Heart left ventricle (tissue), 16 donors: ENCODE measurements at regions of chr12 and their contacts with region 1.

Region 1: GRCh38 chr12:119780786-119781434 is 96.2 kb downstream of the CIT start:
- DNase-seq: peak in 1 of 5 donors; percentile 36
- ATAC-seq: no peak
- H3K4me3 ChIP-seq: no peak overlapping the region
- H3K27ac ChIP-seq: no peak overlapping the region
- H3K4me1 ChIP-seq: no peaks in the 10 kb centered on the region
- H3K27me3 ChIP-seq: no peaks in the 10 kb centered on the region
- CTCF ChIP-seq: peak; percentile 60 to 86 (median 72)
- POLR2A ChIP-seq: no peak

Region 2: GRCh38 chr12:119659289-119659897 is 121.5 kb before region 1 on chr12:
- intact Hi-C with region 1: loop called in 6 of 10 experiments (anchors 2 to 10 kb)
- DNase-seq: no peak
- ATAC-seq: no peak
- H3K4me3 ChIP-seq: no peak overlapping the region
- H3K27ac ChIP-seq: no peak overlapping the region
- H3K4me1 ChIP-seq: no peaks in the 10 kb centered on the region
- H3K27me3 ChIP-seq: no peaks in the 10 kb centered on the region
- CTCF ChIP-seq: peak; percentile 85 to 98 (median 90)
- POLR2A ChIP-seq: no peak

Region 3: DNA sequence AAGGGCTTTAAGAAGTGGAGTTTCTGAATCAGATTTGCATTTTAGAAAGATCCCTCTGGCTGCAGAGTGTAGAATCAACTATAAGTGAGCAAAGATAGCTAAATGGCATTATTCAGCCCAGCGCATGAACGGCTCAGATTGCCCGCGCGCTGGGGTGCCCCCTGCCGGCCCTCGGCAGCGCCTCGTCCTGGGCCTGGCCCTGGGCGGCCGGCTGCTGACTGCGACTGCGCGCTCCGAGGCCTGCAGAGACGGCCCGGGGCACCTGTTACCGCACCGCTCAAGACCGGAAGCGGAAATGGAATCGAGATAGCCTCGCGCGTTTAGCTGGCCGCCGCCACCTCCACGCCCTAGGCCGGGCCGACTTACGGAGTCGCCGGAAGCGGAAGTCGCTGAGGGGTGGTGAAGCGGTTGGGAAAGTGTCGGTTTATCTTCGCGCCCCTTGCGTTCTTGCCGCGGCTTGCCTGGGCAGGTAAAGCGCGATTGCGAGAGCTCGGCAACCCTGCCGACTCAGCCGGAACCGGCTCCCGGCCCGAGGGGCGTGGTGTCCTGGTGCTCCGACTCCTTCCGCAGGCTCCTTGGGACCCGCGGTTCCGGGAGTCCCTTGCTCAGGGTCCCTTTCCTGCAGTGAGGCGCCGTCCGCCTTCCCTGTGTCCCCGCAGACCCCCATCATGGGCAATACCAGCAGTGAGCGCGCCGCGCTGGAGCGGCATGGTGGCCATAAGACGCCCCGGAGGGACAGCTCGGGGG is 113.2 kb before region 1 on chr12 and contains the start of gene PRKAB1:
- intact Hi-C with region 1: loop called in 8 of 10 experiments (anchors 2 to 10 kb)
- DNase-seq: peak; percentile 95 to 98 (median 97)
- ATAC-seq: peak; percentile 99 to 100 (median 100)
- H3K4me3 ChIP-seq: peak within 1 kb of the TSS; percentile 74 to 99 (median 96)
- H3K27ac ChIP-seq: peak within 1 kb of the TSS; percentile 84 to 98 (median 94)
- H3K4me1 ChIP-seq: peaks cover 4 to 45% (median 29%) of the 10 kb centered on the region in 12 donors
- H3K27me3 ChIP-seq: no peaks in the 10 kb centered on the region
- CTCF ChIP-seq: peak; percentile 85 to 99 (median 94)
- POLR2A ChIP-seq: peak in 1 of 2 donors; percentile 55
- total RNA-seq, gene PRKAB1: 8.5 to 19.1 (median 10.3) TPM

Region 4: DNA sequence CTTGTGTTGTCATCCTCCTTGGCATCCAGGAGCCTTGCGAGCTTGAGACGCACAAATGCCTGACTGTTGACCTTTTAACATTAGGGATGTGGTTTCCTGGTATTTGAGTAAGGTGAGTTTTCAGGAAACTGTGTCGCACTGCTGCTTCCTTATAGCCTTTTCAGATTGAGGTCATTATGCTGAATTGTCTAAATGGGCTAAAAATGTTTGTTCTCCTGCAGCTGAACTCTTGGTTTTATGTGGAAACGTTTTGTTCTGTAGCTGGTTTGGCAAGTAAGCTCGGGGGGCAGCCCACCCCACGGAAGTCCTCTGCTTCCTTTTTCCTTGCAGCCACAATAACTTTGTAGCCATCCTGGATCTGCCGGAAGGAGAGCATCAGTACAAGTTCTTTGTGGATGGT is 107.3 kb before region 1 on chr12:
- intact Hi-C with region 1: loop called in 4 of 10 experiments (anchors 5 to 10 kb)
- DNase-seq: peak in 4 of 5 donors; percentile 45 to 63 (median 48)
- ATAC-seq: peak; percentile 61 to 89 (median 78)
- H3K4me3 ChIP-seq: no peak overlapping the region
- H3K27ac ChIP-seq: peak overlapping the region; percentile 52 to 90 (median 72)
- H3K4me1 ChIP-seq: peaks cover 0 to 51% (median 28%) of the 10 kb centered on the region in 12 donors
- H3K27me3 ChIP-seq: no peaks in the 10 kb centered on the region
- CTCF ChIP-seq: no peak
- POLR2A ChIP-seq: no peak

Region 5: DNA sequence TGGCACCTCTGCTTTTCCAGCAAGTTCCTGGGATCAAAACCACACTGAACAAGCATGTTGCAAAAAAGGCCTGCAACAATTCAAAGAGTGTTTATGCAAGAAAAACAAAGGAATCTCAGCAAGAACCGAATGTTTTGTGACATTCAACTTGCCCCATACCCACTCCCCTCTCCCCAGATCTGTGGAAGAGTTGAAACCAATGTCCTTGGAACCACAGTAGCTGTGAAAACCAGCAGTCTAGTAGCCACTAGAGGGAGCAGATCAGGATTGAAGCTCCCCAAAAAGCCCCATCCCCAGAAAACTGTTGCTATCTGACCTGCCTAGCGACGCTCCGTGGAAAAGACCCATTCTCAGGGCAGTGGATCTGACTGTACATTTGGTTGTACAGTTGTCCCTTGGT is 85.9 kb before region 1 on chr12:
- intact Hi-C with region 1: loop called in 2 of 10 experiments (anchors 5 to 10 kb)
- DNase-seq: no peak
- ATAC-seq: no peak
- H3K4me3 ChIP-seq: no peak overlapping the region
- H3K27ac ChIP-seq: no peak overlapping the region
- H3K4me1 ChIP-seq: peaks cover 0 to 27% (median 19%) of the 10 kb centered on the region in 12 donors
- H3K27me3 ChIP-seq: no peaks in the 10 kb centered on the region
- CTCF ChIP-seq: peak in 8 of 12 donors; percentile 19 to 40 (median 35)
- POLR2A ChIP-seq: no peak

Region 6: GRCh38 chr12:119704065-119704747 is 76.7 kb before region 1 on chr12:
- intact Hi-C with region 1: loop called in 2 of 10 experiments (anchors 5 to 10 kb)
- DNase-seq: peak in 4 of 5 donors; percentile 61 to 72 (median 68)
- ATAC-seq: peak; percentile 77 to 99 (median 82)
- H3K4me3 ChIP-seq: no peak overlapping the region
- H3K27ac ChIP-seq: peak overlapping the region; percentile 5 to 79 (median 66)
- H3K4me1 ChIP-seq: peaks cover 0 to 18% (median 9%) of the 10 kb centered on the region in 12 donors
- H3K27me3 ChIP-seq: no peaks in the 10 kb centered on the region
- CTCF ChIP-seq: no peak
- POLR2A ChIP-seq: no peak

Region 7: DNA sequence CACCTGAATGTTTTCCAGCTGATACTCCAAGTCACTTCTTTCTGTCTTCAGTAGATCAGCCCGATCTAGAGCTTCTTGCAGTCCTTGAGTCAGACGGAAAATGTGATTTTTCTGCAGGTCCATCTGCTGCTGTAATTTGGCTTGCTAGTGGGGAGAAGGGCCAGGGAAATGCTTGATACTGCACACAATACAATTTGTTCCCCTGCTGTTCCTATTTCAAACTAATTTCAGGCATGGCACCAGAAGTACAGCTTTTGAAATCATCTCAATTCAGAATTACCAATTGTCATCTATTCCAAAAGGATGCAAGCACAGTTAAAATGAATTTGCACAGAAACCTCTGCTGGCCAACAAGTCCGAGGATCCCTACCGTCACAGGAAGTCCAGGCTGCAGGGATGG is 59.6 kb before region 1 on chr12:
- intact Hi-C with region 1: loop called in 1 of 10 experiments (anchors 5 kb)
- DNase-seq: no peak
- ATAC-seq: no peak
- H3K4me3 ChIP-seq: no peak overlapping the region
- H3K27ac ChIP-seq: no peak overlapping the region
- H3K4me1 ChIP-seq: peaks cover 0 to 8% (median 6%) of the 10 kb centered on the region in 12 donors
- H3K27me3 ChIP-seq: no peaks in the 10 kb centered on the region
- CTCF ChIP-seq: no peak
- POLR2A ChIP-seq: no peak